PC-3 (cell line): ENCODE measurements at regions of chr10 and their contacts with region 1.

Region 1: GRCh38 chr10:114437456-114438292 is 33.4 kb upstream of the AFAP1L2 start:
- DNase-seq: peak; percentile 55
- ATAC-seq: peak; percentile 53
- H3K4me3 ChIP-seq: no peak overlapping the region
- H3K27ac ChIP-seq: no peak overlapping the region
- H3K4me1 ChIP-seq: no peaks in the 10 kb centered on the region
- H3K27me3 ChIP-seq: no peaks in the 10 kb centered on the region
- CTCF ChIP-seq: peak; percentile 65

Region 2: GRCh38 chr10:114304017-114304570 is 133.6 kb before region 1 on chr10:
- CTCF ChIA-PET with region 1: no interaction called
- POLR2A ChIA-PET with region 1: no interaction called
- intact Hi-C with region 1: loop called (anchors 1 kb)
- DNase-seq: peak; percentile 87
- ATAC-seq: peak; percentile 59
- H3K4me3 ChIP-seq: peak overlapping the region; percentile 65
- H3K27ac ChIP-seq: no peak overlapping the region
- H3K4me1 ChIP-seq: peaks cover 12% of the 10 kb centered on the region
- H3K27me3 ChIP-seq: no peaks in the 10 kb centered on the region
- CTCF ChIP-seq: peak; percentile 72

Region 3: GRCh38 chr10:114504769-114505579 is 67.3 kb after region 1 on chr10:
- CTCF ChIA-PET with region 1: no interaction called
- POLR2A ChIA-PET with region 1: no interaction called
- intact Hi-C with region 1: no loop called
- DNase-seq: peak; percentile 40
- ATAC-seq: peak; percentile 64
- H3K4me3 ChIP-seq: no peak overlapping the region
- H3K27ac ChIP-seq: no peak overlapping the region
- H3K4me1 ChIP-seq: peaks cover 9% of the 10 kb centered on the region; the same call in 1 of the 2 replicates
- H3K27me3 ChIP-seq: no peaks in the 10 kb centered on the region
- CTCF ChIP-seq: no peak